T-cell (primary cell): ENCODE measurements at regions of chr3 and their contacts with region 1.

Region 1: DNA sequence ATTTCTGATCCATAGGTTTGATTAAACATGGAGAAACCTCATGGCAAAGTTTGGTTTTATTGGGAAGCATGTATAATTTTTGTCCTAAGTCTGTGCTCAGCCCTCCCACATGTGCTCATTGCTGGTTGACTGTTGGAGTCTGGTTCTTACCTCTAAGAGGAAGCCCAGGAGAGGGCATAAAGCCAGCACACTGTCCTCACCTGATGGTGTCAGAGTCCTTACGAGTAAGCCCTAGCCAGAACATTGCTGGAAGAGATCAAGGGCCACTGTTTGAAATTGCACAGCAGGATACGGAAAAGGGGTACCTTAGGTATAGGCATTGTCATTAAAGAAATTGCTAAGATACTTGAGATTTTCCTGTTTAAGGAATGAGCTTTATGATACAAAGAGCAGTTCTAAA is 21.3 kb downstream of the MLH1 start:
- DNase-seq: no peak
- ATAC-seq: no peak
- H3K4me3 ChIP-seq: no peak overlapping the region
- H3K4me3 Mint-ChIP-seq: no peak overlapping the region
- H3K27ac ChIP-seq: no peak overlapping the region
- H3K27ac Mint-ChIP-seq: no peak overlapping the region
- H3K4me1 ChIP-seq: no peaks in the 10 kb centered on the region
- H3K4me1 Mint-ChIP-seq: no peaks in the 10 kb centered on the region
- H3K27me3 ChIP-seq: no peaks in the 10 kb centered on the region
- H3K27me3 Mint-ChIP-seq: no peaks in the 10 kb centered on the region

Region 2: GRCh38 chr3:36981006-36981405 is 33.6 kb before region 1 on chr3:
- CTCF ChIA-PET with region 1: no interaction called
- POLR2A ChIA-PET with region 1: no interaction called
- DNase-seq: no peak
- ATAC-seq: no peak
- H3K4me3 ChIP-seq: no peak overlapping the region
- H3K4me3 Mint-ChIP-seq: no peak overlapping the region
- H3K27ac ChIP-seq: no peak overlapping the region
- H3K27ac Mint-ChIP-seq: no peak overlapping the region
- H3K4me1 ChIP-seq: no peaks in the 10 kb centered on the region
- H3K4me1 Mint-ChIP-seq: peaks cover 0 to 6% (median 5%) of the 10 kb centered on the region in 3 donors
- H3K27me3 ChIP-seq: no peaks in the 10 kb centered on the region
- H3K27me3 Mint-ChIP-seq: no peaks in the 10 kb centered on the region

Region 3: GRCh38 chr3:37054370-37054769 is 39.8 kb after region 1 on chr3:
- CTCF ChIA-PET with region 1: no interaction called
- POLR2A ChIA-PET with region 1: interaction called in 1 of 2 experiments, 14 read pairs
- DNase-seq: no peak
- ATAC-seq: no peak
- H3K4me3 ChIP-seq: no peak overlapping the region
- H3K4me3 Mint-ChIP-seq: no peak overlapping the region
- H3K27ac ChIP-seq: no peak overlapping the region
- H3K27ac Mint-ChIP-seq: peak overlapping the region; percentile 33 to 67
- H3K4me1 ChIP-seq: no peaks in the 10 kb centered on the region
- H3K4me1 Mint-ChIP-seq: no peaks in the 10 kb centered on the region
- H3K27me3 ChIP-seq: no peaks in the 10 kb centered on the region
- H3K27me3 Mint-ChIP-seq: no peaks in the 10 kb centered on the region